Body of pancreas (tissue), 4 donors: ENCODE measurements at regions of chr10 and their contacts with region 1.

Region 1: DNA sequence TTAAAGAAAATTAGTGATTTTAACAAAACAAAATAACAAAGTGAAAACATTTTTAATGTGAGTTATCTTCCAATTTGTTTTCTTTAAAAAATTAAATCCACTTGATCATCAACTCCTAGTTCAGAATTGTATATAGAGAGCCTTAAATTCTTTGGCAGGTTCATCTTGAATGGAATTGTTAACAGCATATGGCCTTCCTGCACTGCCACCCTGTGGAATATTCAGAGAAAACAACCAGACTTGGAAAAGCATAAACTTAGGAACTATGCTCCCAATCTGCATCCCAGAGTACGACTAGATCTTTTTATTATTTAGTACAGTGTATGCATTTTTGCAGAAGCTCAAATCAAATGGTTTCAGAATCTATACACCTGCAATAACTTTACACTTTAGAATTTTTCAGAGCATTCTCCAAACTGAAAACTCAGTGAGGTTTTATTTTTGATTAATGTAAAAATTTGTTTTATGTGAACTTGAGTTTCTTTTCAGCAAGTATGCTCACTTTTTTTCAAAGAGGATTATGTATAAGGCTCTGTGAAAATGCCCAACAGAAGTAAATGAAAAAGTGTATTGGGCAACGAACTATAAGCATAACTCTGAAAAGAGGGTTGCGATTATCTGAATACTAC is 44.9 kb upstream of the ANK3 start:
- DNase-seq: peak; percentile 39 to 58 (median 48)
- ATAC-seq: peak; percentile 59
- H3K4me3 ChIP-seq: no peak overlapping the region
- H3K27ac ChIP-seq: no peak overlapping the region
- H3K4me1 ChIP-seq: no peaks in the 10 kb centered on the region
- H3K27me3 ChIP-seq: no peaks in the 10 kb centered on the region
- CTCF ChIP-seq: peak in 6 of 7 experiments; percentile 51 to 80 (median 72)
- POLR2A ChIP-seq: no peak

Region 2: GRCh38 chr10:60044242-60044641 is 390.3 kb before region 1 on chr10:
- intact Hi-C with region 1: no loop called
- DNase-seq: no peak
- ATAC-seq: no peak
- H3K4me3 ChIP-seq: no peak overlapping the region
- H3K27ac ChIP-seq: no peak overlapping the region
- H3K4me1 ChIP-seq: peaks cover 47% of the 10 kb centered on the region
- H3K27me3 ChIP-seq: no peaks in the 10 kb centered on the region
- CTCF ChIP-seq: no peak
- POLR2A ChIP-seq: no peak

Region 3: DNA sequence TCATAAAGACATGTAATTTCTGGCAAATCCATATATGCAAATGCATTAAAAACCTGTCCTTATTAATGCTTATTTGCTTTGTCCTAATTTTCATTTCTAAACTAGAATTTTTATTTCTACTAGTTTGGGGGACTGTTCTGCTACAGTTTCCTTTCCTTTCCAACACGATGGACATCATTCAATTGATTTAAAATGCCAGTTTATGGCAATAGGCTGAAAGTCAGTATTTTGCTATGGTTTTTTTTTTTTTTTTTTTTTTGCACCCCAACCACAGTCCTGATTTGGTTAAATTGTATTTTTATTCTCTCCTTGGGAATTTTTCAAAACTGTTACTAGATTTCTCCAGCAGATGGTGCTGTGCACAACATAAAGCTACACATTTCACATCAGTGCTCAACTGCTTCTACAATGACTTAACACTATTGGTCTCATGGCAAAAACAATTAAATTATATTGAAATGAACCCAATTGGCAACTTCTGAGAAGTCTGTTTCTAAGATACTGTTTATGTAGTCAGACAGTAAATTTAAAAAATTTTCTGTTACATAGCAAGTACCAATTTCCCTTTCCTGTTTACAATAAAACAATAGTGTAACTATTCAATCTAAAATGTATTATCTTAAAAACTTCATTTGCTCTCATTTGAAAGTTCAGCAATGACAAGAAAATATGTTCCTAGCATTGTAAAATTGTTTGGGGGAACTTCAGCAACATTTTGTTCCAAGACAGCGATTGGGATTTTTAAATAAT is 334.4 kb before region 1 on chr10:
- intact Hi-C with region 1: loop called (anchors 10 kb)
- DNase-seq: peak in 2 of 4 donors; percentile 14 to 19
- ATAC-seq: peak; percentile 59
- H3K4me3 ChIP-seq: no peak overlapping the region
- H3K27ac ChIP-seq: no peak overlapping the region
- H3K4me1 ChIP-seq: no peaks in the 10 kb centered on the region
- H3K27me3 ChIP-seq: no peaks in the 10 kb centered on the region
- CTCF ChIP-seq: peak; percentile 27 to 74 (median 59)
- POLR2A ChIP-seq: no peak

Region 4: DNA sequence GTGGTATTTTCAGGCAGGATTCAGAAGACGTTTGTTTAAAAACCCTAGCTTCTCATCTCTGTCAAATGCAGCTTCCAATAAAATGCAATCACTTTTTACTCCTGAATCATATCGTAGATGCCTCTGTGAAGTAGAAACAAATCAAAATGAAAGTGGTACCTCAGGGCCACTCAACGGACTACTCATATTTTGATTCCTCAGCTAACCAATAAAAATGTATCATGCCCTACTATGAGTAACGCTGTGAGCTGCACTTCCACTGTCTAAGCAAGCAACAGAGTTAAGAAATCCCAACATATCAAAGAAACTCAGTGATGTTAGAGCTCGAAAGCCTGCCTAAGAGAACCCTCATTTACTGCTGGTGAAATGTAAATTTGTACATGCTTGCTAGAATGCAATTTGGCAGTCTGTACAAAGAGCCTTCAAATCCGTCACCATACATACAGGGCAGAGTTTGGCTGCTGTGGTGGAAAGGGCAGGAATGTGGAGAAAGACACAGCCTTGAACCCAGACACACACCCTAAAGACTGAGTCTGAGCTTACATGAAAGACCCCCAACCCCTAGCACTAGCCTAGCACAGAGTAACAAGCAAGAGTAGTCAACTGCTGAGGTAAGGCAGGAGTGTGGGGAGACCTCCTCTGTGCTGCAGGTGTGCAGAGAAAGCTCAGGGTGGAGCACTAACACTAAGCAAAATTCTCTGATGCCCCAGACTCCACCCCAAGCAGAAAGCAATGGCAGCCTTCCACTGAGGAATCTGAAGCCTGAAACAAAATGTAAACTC is 196.4 kb before region 1 on chr10:
- intact Hi-C with region 1: loop called (anchors 5 kb)
- DNase-seq: peak; percentile 17 to 61 (median 34)
- ATAC-seq: peak; percentile 33
- H3K4me3 ChIP-seq: no peak overlapping the region
- H3K27ac ChIP-seq: no peak overlapping the region
- H3K4me1 ChIP-seq: no peaks in the 10 kb centered on the region
- H3K27me3 ChIP-seq: no peaks in the 10 kb centered on the region
- CTCF ChIP-seq: peak in 4 of 7 experiments; percentile 39 to 65 (median 52)
- POLR2A ChIP-seq: no peak

Region 5: DNA sequence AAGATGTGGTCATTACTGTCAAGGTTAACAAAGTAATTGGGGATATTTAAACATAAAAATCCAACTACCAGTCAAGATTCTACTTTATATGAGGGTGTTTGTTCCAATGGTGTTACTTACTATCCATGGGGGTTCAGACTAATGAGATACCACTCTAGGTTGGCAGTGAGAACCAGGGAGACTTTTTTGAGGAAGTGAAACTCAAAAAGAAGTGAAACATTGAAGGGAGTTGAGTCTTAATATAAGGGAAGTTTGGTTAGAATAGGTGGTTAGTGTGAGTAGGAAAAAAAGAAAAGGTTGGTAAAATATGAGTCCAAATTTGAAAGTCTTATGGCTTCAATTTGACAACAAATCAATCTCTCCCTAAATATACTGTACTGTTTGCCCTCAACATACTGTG is 78.7 kb after region 1 on chr10:
- intact Hi-C with region 1: no loop called
- DNase-seq: no peak
- ATAC-seq: no peak
- H3K4me3 ChIP-seq: no peak overlapping the region
- H3K27ac ChIP-seq: no peak overlapping the region
- H3K4me1 ChIP-seq: peaks cover 2% of the 10 kb centered on the region
- H3K27me3 ChIP-seq: no peaks in the 10 kb centered on the region
- CTCF ChIP-seq: no peak
- POLR2A ChIP-seq: no peak